ENCODE measurements at regions of chr3 and their contacts with region 1.

Region 1: DNA sequence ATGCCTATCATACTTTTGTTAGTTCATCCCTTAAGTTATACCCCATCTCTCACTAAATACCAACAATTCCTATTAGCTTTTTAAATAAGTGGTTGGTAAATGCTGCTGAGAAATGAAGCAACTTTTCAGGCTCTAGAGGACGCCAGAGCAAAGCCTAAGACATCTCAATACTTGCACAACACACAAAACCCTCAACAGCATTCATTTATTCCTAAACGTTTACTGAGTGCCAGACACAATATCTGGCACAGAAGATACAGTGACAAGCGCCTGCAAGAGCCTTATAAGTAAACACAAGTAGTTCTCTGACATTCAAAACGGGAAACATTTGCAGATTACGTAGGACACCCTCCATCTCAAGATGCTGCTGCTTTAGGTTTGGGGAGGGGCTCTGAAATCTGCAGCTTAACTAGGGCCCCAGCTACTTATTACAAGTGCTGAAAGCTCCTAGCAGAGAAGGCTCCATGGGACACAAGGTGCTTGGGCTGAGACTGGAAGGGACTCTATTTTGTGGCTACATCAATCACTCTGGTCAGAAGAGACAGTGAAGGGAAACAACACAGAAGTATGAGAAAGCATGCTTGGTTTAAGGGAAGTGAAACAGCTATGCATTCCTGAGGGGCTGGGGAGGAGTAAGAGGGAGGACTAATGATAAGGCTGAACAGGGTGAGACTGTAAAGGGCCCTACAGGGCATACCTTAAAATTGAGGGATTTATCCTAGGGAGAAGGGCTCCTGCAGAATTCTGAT is 311.3 kb downstream of the PLCL2 start:
- DNase-seq: peak; percentile 68
- ATAC-seq: peak; percentile 80
- H3K4me3 ChIP-seq: peak overlapping the region in 2 of 5 experiments; percentile 10 to 29
- H3K4me3 Mint-ChIP-seq: peak overlapping the region; percentile 73
- H3K27ac ChIP-seq: peak overlapping the region; percentile 48 to 58
- H3K27ac Mint-ChIP-seq: peak overlapping the region; percentile 78
- H3K4me1 ChIP-seq: peaks cover 24 to 33% of the 10 kb centered on the region in 2 donors
- H3K4me1 Mint-ChIP-seq: peaks cover 39% of the 10 kb centered on the region
- H3K27me3 ChIP-seq: no peaks in the 10 kb centered on the region
- H3K27me3 Mint-ChIP-seq: no peaks in the 10 kb centered on the region
- CTCF ChIP-seq: no peak

Region 2: DNA sequence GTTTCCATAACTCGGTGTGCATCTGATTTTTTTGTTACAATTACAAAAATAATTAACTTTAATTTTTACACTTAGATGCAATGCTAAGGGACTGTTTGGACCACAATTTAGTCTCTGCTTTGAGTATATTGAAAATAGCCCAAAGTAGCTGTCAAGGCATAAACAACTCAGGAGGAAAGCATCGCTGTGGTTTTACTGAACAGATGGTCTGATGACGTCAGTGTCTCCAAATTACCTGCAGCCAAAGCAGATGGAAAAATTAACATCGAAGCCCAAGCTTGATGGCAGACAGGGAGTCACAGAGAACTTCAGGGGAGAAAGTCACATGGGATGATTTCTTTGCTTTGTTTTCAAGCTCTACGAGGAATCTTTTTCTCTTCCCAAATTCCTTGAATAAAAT is 394.3 kb before region 1 on chr3:
- CTCF ChIA-PET with region 1: no interaction called
- POLR2A ChIA-PET with region 1: no interaction called
- intact Hi-C with region 1: loop called (anchors 5 kb)
- DNase-seq: peak; percentile 55
- ATAC-seq: peak; percentile 52
- H3K4me3 ChIP-seq: no peak overlapping the region
- H3K4me3 Mint-ChIP-seq: peak overlapping the region; percentile 75
- H3K27ac ChIP-seq: peak overlapping the region in 1 of 2 donors; percentile 3
- H3K27ac Mint-ChIP-seq: peak overlapping the region; percentile 92
- H3K4me1 ChIP-seq: peaks cover 42 to 47% of the 10 kb centered on the region in 2 donors
- H3K4me1 Mint-ChIP-seq: peaks cover 46% of the 10 kb centered on the region
- H3K27me3 ChIP-seq: no peaks in the 10 kb centered on the region
- H3K27me3 Mint-ChIP-seq: no peaks in the 10 kb centered on the region
- CTCF ChIP-seq: no peak

Region 3: DNA sequence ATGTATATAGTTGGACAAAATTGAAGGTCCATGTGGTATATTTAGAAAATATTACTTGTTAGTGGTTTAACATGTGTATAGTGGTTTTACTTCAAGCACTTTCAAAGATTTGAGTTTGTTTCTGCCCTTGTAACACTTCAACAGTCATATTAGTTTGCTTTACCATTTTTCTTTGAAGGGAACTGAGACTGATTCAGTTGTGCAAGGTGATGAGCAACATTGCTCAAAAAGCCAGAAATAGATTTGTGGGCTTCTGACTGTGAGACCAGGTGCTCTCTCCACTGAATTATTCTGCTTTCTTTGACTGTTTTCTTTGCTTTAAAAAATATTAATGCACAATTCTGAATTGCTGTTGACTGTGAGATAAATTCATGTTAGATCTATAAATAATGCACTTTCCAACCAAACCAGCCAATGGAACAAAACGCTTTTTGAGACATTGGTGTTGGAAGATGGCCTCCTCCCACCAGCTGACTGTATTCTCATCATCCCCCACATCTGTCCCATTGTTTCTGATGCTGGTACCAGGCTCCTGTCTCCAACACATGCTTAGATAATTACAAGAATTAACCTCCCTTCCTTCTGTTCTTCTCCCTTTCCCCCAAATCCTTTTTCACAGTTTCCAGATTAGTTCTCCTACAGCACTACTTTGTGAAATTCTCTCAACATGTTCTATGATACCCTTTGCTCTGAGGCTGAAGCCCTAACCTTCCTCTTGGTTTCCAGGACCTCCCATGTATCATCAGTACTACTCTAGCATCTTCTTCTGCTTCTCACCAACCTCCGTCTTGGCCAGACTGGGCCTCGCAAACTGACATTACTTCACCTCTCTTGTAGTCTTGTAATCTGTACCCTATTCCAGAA is 283.4 kb before region 1 on chr3:
- CTCF ChIA-PET with region 1: no interaction called
- POLR2A ChIA-PET with region 1: no interaction called
- intact Hi-C with region 1: loop called (anchors 10 kb)
- DNase-seq: peak; percentile 55
- ATAC-seq: peak; percentile 86
- H3K4me3 ChIP-seq: peak overlapping the region in 1 of 5 experiments; percentile 52
- H3K4me3 Mint-ChIP-seq: peak overlapping the region; percentile 70
- H3K27ac ChIP-seq: peak overlapping the region; percentile 77 to 88
- H3K27ac Mint-ChIP-seq: peak overlapping the region; percentile 87
- H3K4me1 ChIP-seq: peaks cover 69 to 78% of the 10 kb centered on the region in 2 donors
- H3K4me1 Mint-ChIP-seq: peaks cover 71% of the 10 kb centered on the region
- H3K27me3 ChIP-seq: no peaks in the 10 kb centered on the region
- H3K27me3 Mint-ChIP-seq: no peaks in the 10 kb centered on the region
- CTCF ChIP-seq: no peak

Region 4: DNA sequence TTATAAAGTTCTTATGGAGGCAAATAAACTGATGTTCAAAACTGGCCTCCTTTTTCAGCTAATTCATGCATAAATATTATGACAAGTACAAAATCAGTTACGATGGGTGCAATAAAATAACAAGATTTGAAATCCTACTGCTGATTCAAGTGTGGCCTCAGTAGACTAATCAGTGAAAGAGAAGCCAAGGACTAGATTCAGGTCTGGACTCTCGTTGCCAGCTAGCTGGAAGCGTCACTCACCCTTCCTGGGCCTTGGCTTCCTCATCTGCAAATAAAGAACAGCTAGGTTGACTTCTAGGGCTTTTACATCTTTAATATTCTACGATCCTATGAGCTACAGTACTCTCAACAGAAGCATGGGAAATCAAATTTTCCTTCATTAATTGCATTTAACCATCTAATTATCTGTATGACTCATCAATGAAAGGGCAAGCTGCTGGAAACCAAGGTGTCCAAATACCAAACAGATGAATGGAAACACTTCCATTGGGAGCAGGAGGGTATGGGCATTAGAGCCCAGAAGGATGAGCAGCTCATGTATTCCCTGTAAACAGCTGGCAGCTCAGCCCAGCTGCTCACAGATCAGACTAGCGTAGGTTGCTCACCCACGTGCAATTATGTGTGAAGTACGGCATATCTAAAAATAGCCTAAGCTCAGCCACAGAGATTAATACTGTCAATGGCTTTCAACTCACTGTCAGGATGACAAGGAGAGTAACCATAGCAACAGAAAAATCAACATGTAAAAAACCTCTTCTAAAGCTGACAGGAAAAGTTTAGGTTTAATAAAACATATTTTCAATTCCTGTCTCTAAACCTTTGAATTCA is 16.4 kb before region 1 on chr3:
- CTCF ChIA-PET with region 1: interaction called, 3 read pairs
- POLR2A ChIA-PET with region 1: no interaction called
- intact Hi-C with region 1: loop called (anchors 2 kb)
- DNase-seq: peak; percentile 68
- ATAC-seq: peak; percentile 61
- H3K4me3 ChIP-seq: no peak overlapping the region
- H3K4me3 Mint-ChIP-seq: no peak overlapping the region
- H3K27ac ChIP-seq: no peak overlapping the region
- H3K27ac Mint-ChIP-seq: peak overlapping the region; percentile 53
- H3K4me1 ChIP-seq: peaks cover 22% of the 10 kb centered on the region in 2 donors
- H3K4me1 Mint-ChIP-seq: peaks cover 27% of the 10 kb centered on the region
- H3K27me3 ChIP-seq: no peaks in the 10 kb centered on the region
- H3K27me3 Mint-ChIP-seq: no peaks in the 10 kb centered on the region
- CTCF ChIP-seq: no peak

Region 5: DNA sequence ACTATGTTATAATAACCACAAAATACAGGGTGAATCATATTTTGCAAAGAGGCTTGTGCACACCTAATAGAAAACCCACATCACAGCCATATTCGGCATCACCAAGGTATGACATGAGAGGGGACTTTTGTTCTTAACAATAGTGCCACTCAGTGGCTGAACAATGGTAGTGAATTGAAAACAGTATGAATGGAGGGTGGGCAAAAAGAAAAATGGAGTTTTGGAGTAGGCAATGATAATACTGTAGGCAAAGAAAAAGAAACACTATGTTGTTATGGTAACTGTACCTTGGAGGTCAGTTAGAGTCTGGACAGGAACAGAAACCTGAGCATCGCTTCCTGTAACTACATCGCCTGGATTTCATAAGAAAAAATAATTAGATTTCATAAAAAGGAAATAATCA is 37.4 kb after region 1 on chr3:
- CTCF ChIA-PET with region 1: interaction called, 5 read pairs
- POLR2A ChIA-PET with region 1: no interaction called
- intact Hi-C with region 1: loop called (anchors 1 kb)
- DNase-seq: peak; percentile 71
- ATAC-seq: peak; percentile 97
- H3K4me3 ChIP-seq: no peak overlapping the region
- H3K4me3 Mint-ChIP-seq: no peak overlapping the region
- H3K27ac ChIP-seq: no peak overlapping the region
- H3K27ac Mint-ChIP-seq: no peak overlapping the region
- H3K4me1 ChIP-seq: peaks cover 4 to 13% of the 10 kb centered on the region in 2 donors
- H3K4me1 Mint-ChIP-seq: peaks cover 20% of the 10 kb centered on the region
- H3K27me3 ChIP-seq: no peaks in the 10 kb centered on the region
- H3K27me3 Mint-ChIP-seq: no peaks in the 10 kb centered on the region
- CTCF ChIP-seq: peak; percentile 86